Transverse colon (tissue), 4 donors: ENCODE measurements at regions of chr10 and their contacts with region 1.

Region 1: DNA sequence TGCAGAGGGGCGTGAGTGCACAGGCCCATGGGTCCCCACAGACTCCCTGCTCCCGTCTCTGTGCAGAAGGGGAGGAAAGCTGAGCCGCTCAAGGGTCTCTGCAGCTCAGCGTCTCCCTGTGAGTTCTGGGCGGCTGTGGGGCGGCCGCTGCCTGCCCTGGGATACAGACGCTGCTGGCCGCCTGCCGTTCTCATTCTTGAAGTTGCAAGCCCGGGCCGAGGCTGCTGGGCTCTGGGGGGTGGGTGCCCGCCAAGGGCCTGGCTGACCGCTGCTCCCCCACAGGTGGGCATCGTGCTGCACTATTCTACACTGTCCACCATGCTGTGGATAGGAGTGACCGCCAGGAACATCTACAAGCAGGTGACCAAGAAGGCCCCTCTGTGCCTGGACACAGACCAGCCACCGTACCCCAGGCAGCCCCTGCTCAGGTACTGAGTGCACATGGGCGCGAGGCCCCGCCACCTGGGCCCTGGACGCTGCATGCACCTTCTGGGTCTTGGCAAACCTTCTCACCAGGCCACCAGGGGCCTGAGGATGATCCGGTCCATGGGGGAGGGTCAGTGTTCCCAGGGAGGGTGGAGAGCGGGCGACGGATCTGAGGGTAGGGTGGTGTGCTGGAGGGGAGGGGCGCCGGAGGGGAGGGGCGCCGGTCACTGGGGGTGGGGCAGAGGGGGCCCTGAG is 14.8 kb downstream of the ADGRA1 start:
- DNase-seq: no peak
- H3K4me3 ChIP-seq: no peak overlapping the region
- H3K27ac ChIP-seq: no peak overlapping the region
- H3K4me1 ChIP-seq: peaks cover 0 to 4% (median 0%) of the 10 kb centered on the region in 4 donors
- H3K27me3 ChIP-seq: peaks cover 40% of the 10 kb centered on the region
- CTCF ChIP-seq: no peak
- EP300 ChIP-seq: no peak
- POLR2A ChIP-seq: no peak

Region 2: GRCh38 chr10:132904181-132904819 is 198.3 kb before region 1 on chr10:
- in situ Hi-C with region 1: no loop called
- intact Hi-C with region 1: no loop called
- DNase-seq: no peak
- H3K4me3 ChIP-seq: no peak overlapping the region
- H3K27ac ChIP-seq: no peak overlapping the region
- H3K4me1 ChIP-seq: no peaks in the 10 kb centered on the region
- H3K27me3 ChIP-seq: no peaks in the 10 kb centered on the region
- CTCF ChIP-seq: peak; percentile 45 to 72 (median 66)
- EP300 ChIP-seq: no peak
- POLR2A ChIP-seq: no peak

Region 3: GRCh38 chr10:133150656-133151055 is 48.1 kb after region 1 on chr10:
- in situ Hi-C with region 1: no loop called
- intact Hi-C with region 1: loop called (anchors 1 kb)
- DNase-seq: no peak
- H3K4me3 ChIP-seq: no peak overlapping the region
- H3K27ac ChIP-seq: no peak overlapping the region
- H3K4me1 ChIP-seq: no peaks in the 10 kb centered on the region
- H3K27me3 ChIP-seq: peaks cover 51% of the 10 kb centered on the region
- CTCF ChIP-seq: no peak
- EP300 ChIP-seq: no peak
- POLR2A ChIP-seq: no peak